Body of pancreas (tissue), 4 donors: ENCODE measurements at regions of chr1 and their contacts with region 1.

Region 1: DNA sequence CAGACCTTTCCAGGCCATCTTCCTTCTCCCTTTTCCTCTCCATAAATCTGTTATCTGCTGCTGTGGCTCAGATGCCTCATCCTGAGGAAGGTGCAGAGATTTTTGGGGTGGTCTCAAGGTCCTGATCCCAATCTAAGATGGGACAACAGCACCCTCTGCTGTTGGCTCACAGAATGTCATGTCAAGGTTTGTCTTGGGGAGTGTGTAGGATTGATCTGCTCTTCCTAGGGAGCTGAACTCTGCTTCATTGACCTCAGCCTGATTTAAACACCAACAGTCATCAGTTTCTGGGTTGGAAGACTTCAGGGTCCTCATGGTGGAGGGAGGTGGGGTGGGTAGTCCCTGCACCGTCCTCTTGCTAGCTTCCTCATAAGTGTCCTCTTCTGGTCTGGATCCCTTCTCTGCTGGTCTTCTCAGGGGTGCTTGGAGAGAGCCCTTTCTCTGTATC is 62.8 kb upstream of the LAX1 start:
- DNase-seq: peak; percentile 39 to 70 (median 56)
- ATAC-seq: peak; percentile 48
- H3K4me3 ChIP-seq: no peak overlapping the region
- H3K27ac ChIP-seq: no peak overlapping the region
- H3K4me1 ChIP-seq: no peaks in the 10 kb centered on the region
- H3K27me3 ChIP-seq: no peaks in the 10 kb centered on the region
- CTCF ChIP-seq: peak; percentile 41 to 96 (median 83)
- POLR2A ChIP-seq: no peak

Region 2: DNA sequence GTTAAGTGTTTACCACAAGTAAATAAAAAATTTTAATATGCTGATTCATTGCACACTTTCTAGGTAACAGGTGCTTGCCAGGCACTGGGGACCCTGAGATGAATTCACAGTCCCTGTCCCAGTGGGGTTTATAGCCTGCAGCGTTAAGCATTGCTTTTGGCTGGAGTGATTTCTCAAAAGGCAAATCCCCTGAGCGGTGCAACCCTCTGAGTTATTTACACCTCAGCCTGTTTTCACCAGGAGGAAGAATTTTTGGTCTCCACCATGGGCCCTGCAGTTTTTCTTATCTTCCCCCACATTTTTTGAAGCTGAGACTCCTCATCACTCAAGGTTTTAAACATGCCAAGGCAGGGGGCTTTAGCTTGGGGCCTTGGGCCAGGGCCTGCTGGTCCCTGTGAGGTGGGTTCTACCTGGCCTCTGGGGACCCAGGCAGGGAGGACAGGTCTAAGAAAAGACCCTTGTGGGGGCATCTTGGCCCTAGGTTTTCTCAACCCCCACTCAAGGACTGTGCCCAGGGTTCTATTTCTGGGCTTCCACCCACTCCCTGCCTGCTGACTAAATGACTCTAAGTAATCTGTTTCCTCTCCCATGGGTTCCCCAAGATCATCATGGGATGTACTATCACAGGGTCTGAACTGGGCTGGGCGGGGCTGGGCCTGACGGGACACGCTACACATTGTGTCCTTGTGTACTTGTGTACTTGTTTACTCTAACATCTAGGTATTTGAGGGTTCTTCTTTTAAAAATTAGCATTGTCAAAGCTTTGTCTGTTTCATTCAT is 462.4 kb before region 1 on chr1:
- intact Hi-C with region 1: loop called (anchors 10 kb)
- DNase-seq: no peak
- ATAC-seq: no peak
- H3K4me3 ChIP-seq: no peak overlapping the region
- H3K27ac ChIP-seq: no peak overlapping the region
- H3K4me1 ChIP-seq: no peaks in the 10 kb centered on the region
- H3K27me3 ChIP-seq: no peaks in the 10 kb centered on the region
- CTCF ChIP-seq: no peak
- POLR2A ChIP-seq: no peak

Region 3: DNA sequence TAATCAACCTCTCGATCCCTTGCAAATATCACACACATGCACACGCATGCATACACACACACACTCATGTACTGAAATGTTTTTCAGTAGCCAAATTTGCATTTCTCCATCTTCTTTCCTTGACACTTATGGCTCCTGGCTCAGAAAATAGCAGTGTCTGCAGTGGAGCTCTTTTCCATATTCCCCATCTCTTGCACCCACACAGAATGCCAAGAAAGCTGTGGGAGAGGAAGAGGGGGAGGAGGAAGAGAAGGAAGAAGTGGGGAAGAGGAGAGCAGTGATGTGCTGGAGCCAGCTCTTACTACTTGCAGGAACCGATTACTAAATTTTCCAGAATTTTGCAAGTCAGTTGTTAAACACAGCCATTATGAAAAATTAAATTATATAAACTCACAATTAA is 198.3 kb before region 1 on chr1:
- intact Hi-C with region 1: loop called (anchors 2 kb)
- DNase-seq: no peak
- ATAC-seq: no peak
- H3K4me3 ChIP-seq: no peak overlapping the region
- H3K27ac ChIP-seq: no peak overlapping the region
- H3K4me1 ChIP-seq: no peaks in the 10 kb centered on the region
- H3K27me3 ChIP-seq: no peaks in the 10 kb centered on the region
- CTCF ChIP-seq: no peak
- POLR2A ChIP-seq: no peak

Region 4: GRCh38 chr1:203624341-203624712 is 77.8 kb before region 1 on chr1:
- intact Hi-C with region 1: loop called (anchors 5 kb)
- DNase-seq: no peak
- ATAC-seq: no peak
- H3K4me3 ChIP-seq: no peak overlapping the region
- H3K27ac ChIP-seq: no peak overlapping the region
- H3K4me1 ChIP-seq: peaks cover 30% of the 10 kb centered on the region
- H3K27me3 ChIP-seq: no peaks in the 10 kb centered on the region
- CTCF ChIP-seq: no peak
- POLR2A ChIP-seq: no peak